ENCODE measurements at regions of chr9 and their contacts with region 1.

Region 1: GRCh38 chr9:13979941-13980318 is 334.0 kb downstream of the NFIB start:
- DNase-seq: no peak
- H3K4me3 ChIP-seq: no peak overlapping the region
- H3K27ac ChIP-seq: no peak overlapping the region
- H3K4me1 ChIP-seq: no peaks in the 10 kb centered on the region
- H3K27me3 ChIP-seq: no peaks in the 10 kb centered on the region
- CTCF ChIP-seq: no peak
- EP300 ChIP-seq: no peak
- POLR2A ChIP-seq: no peak
- RAD21 ChIP-seq: no peak

Region 2: DNA sequence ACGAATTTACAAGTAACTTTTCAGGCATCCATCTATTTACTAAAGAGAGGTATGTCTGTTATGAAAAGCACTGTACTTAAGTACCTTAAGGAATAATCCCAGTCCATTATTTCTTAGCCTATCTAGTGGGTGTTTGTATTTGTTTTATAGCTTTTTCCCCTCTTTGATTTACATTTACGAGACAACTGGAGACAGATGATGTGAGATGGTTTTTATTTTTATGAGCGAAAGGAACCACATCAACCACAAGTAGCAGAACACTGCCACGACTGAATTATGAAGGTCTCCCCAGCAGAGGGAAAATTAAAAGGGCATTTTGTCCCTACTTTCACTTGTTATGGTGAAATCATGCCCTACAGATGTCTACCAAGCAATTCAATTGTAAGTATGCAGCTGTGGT is 23.8 kb before region 1 on chr9:
- CTCF ChIA-PET with region 1: no interaction called
- POLR2A ChIA-PET with region 1: no interaction called
- DNase-seq: no peak
- H3K4me3 ChIP-seq: no peak overlapping the region
- H3K27ac ChIP-seq: no peak overlapping the region
- H3K4me1 ChIP-seq: peaks cover 0 to 12% (median under 1%) of the 10 kb centered on the region in 4 experiments; a peak in 6 of 7 replicates
- H3K27me3 ChIP-seq: no peaks in the 10 kb centered on the region; a peak in 1 of 7 replicates
- CTCF ChIP-seq: no peak
- EP300 ChIP-seq: no peak
- POLR2A ChIP-seq: no peak
- RAD21 ChIP-seq: no peak

Region 3: DNA sequence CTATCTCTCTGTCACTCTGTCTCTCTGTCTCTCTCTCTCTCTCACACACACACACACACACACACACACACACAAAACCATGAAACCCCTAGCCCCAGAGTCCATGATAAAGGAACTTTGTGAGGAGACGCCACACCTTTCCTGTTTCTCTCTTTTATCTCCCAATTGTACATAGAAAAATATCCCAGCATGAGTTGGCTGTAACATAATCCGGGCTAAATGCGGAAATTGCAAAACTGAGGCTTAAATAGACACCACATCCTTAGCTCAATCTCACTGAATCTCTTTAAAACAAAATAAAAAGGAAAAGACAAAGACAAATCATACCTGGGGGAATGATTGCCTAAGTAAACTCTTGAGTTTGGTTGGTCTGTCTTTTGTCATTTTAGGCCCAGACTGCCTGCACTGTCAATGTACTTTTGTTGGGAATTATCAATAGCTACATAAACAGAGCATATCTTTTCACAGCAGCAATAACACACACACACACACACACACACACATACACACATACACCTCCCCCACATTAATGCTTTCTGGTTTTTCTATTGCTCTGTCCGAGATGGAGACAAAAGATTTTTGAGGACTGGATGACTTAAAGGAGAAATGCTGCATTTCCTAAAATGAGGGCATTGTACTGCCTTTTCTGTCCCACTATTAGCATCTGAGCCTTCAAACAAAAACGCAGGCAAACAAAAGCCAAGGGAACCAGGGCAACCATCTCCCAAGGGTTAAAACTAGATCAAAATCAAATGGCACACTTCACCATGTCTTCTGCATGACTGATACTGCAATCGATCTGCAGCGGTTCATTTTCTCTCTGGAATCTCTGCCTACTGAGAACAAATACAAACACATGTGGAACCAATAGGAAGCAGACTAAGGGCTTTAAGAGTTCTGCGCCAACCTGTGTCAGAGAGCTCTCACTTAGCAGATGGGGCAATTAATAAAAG is 12.5 kb after region 1 on chr9:
- CTCF ChIA-PET with region 1: interaction called, 10 read pairs
- POLR2A ChIA-PET with region 1: no interaction called
- DNase-seq: no peak
- H3K4me3 ChIP-seq: no peak overlapping the region
- H3K27ac ChIP-seq: no peak overlapping the region
- H3K4me1 ChIP-seq: no peaks in the 10 kb centered on the region
- H3K27me3 ChIP-seq: no peaks in the 10 kb centered on the region
- CTCF ChIP-seq: no peak
- EP300 ChIP-seq: no peak
- POLR2A ChIP-seq: no peak
- RAD21 ChIP-seq: no peak